Right lobe of liver (tissue), 6 donors: ENCODE measurements at regions of chr7 and their contacts with region 1.

Region 1: GRCh38 chr7:6323967-6324701 is 51.7 kb upstream of the CYTH3 start:
- DNase-seq: no peak
- ATAC-seq: no peak
- H3K4me3 ChIP-seq: no peak overlapping the region
- H3K27ac ChIP-seq: no peak overlapping the region
- H3K4me1 ChIP-seq: no peaks in the 10 kb centered on the region
- H3K27me3 ChIP-seq: no peaks in the 10 kb centered on the region
- CTCF ChIP-seq: no peak
- POLR2A ChIP-seq: no peak

Region 2: GRCh38 chr7:6160191-6160623 is 163.9 kb before region 1 on chr7:
- intact Hi-C with region 1: loop called (anchors 10 kb)
- DNase-seq: peak in 1 of 3 donors; percentile 47
- ATAC-seq: peak; percentile 68 to 81 (median 76)
- H3K4me3 ChIP-seq: no peak overlapping the region
- H3K27ac ChIP-seq: no peak overlapping the region
- H3K4me1 ChIP-seq: no peaks in the 10 kb centered on the region
- H3K27me3 ChIP-seq: no peaks in the 10 kb centered on the region
- CTCF ChIP-seq: peak; percentile 44 to 49 (median 46)
- POLR2A ChIP-seq: no peak

Region 3: GRCh38 chr7:6640246-6640721 is 316.1 kb after region 1 on chr7:
- intact Hi-C with region 1: no loop called
- DNase-seq: no peak
- ATAC-seq: no peak
- H3K4me3 ChIP-seq: no peak overlapping the region
- H3K27ac ChIP-seq: no peak overlapping the region
- H3K4me1 ChIP-seq: peaks cover 0 to 5% (median 0%) of the 10 kb centered on the region in 4 donors
- H3K27me3 ChIP-seq: no peaks in the 10 kb centered on the region
- CTCF ChIP-seq: no peak
- POLR2A ChIP-seq: no peak